Head of caudate nucleus (tissue), 42 donors: ENCODE measurements at regions of chr4 and their contacts with region 1.

Region 1: GRCh38 chr4:75995727-75996126 is 5.0 kb upstream of the SDAD1 start:
- DNase-seq: peak in 1 of 42 donors; percentile 41

Region 2: DNA sequence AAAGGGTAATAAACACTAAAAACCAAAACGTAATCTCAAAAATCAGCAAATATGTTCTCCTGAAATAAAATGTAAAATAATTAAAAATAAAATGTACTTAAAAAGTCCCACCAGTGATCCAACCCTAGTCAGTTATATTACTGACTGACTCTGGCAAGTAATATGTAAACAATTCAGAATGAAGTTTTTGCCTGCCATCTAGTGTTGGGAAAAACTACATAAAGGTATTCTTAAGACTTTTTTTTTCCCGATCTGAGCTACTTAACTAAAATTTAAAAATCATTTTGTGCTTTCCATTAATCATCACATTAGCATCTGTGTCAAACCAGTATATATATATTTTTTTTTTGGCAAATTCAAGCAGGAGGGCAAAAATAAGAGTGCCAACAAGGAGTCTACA is 505.6 kb before region 1 on chr4:
- intact Hi-C with region 1: no loop called
- DNase-seq: no peak

Region 3: DNA sequence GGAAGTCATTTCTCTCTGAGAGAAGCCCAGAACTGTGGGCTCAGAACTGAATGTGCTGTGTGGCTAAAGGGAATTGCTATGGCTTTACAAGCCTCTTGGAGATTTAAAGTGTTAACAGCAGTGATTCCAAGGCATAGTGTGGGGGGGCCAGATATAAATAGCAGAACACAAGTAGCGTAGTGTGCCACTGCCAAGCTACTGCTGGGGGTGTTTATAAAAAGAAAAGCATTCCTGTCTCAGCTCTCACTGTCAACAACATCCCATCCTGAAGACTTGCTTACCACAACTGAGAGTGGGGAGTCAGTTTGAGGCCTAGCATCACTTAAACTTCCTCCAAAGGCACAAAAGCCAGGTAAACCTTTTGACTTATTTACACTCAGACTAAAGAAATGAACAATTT is 78.7 kb after region 1 on chr4 and contains the start of gene ART3:
- intact Hi-C with region 1: loop called (anchors 5 kb)
- DNase-seq: peak in 12 of 42 donors; percentile 3 to 46 (median 20)